Common myeloid progenitor, CD34-positive (primary cell): ENCODE measurements at regions of chr1 and their contacts with region 1.

Region 1: DNA sequence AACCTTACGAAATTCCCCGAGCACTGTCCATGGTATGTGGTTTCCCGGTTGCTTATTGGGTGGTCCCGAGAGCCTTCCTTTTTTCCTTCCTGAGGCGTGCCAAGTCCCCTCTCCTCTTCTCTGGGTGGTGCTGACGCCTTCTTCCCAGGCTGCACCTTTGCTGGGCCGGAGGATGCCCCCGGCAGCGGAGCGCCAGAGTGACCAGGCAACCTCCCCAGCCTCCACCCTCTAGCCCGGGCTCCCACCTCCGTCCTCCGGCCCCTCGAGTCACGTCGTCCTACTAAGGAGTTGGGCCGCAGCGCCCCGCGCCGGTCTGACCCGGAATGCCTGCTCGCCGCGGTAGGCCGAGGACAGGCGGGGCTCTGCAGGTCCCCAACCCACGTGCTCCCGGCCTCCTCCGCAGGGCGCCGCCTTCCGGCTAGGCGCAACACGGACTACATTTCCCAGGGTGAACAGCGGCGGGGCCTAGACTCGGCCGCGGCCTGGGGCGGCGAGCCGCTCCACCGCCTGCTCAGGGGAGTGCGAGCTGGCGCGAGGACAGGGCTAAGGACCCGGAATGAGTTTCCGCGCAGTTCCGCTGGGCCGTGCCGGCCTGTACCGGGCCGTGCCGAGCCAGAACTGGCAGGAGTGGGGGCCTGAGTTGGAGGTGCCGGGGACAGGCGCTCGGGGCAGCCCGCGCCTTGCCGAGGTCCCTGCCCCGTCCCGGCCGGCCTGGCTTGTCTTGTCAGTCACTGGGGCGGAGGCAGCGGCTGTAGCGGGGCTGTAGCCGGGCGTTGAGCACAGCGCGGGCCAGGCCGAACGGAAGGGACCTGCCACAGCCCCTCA is at the start of gene IPO13:
- DNase-seq: peak; percentile 96 to 98 (median 98)
- H3K4me3 ChIP-seq: peak within 1 kb of the TSS; percentile 67 to 92 (median 82)
- H3K27ac ChIP-seq: peak within 1 kb of the TSS; percentile 98 to 99
- H3K4me1 ChIP-seq: peaks cover 6 to 37% (median 23%) of the 10 kb centered on the region in 4 experiments
- H3K27me3 ChIP-seq: no peaks in the 10 kb centered on the region

Region 2: GRCh38 chr1:43958351-43959255 is 12.2 kb after region 1 on chr1:
- CTCF ChIA-PET with region 1: interaction called, 22 read pairs
- POLR2A ChIA-PET with region 1: no interaction called
- DNase-seq: no peak
- H3K4me3 ChIP-seq: no peak overlapping the region
- H3K27ac ChIP-seq: no peak overlapping the region
- H3K4me1 ChIP-seq: peaks cover 0 to 2% (median 0%) of the 10 kb centered on the region in 4 experiments
- H3K27me3 ChIP-seq: no peaks in the 10 kb centered on the region